ENCODE measurements at regions of chr1 and their contacts with region 1.

Region 1: GRCh38 chr1:210143465-210144062 is 89.0 kb upstream of the SERTAD4 start:
- DNase-seq: peak; percentile 95
- ATAC-seq: peak; percentile 76
- H3K4me3 ChIP-seq: no peak overlapping the region
- H3K27ac ChIP-seq: no peak overlapping the region
- H3K4me1 ChIP-seq: 0 out of 2 replicates have a peak, but pooled peaks cover 5% of the 10 kb centered on the region
- H3K27me3 ChIP-seq: no peaks in the 10 kb centered on the region
- CTCF ChIP-seq: peak; percentile 91

Region 2: DNA sequence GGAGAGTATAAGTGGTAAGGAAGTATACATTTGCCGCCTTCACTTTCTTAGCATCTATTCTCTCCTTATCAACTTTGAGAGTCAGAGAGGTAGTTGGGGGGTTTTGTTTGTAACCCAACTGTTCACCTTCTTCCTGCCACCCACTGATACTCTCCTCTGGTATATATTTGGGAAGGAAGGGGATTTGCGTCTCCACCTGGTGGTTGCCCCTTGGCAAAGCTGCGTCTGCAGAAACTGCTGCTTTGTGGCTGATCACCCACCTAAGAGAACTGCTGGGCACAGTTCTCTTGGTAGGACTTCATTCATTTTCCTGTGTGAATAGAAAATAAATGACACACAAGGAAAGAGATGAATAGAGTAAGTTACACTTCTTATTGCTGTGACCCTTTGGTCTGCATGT is 118.6 kb before region 1 on chr1:
- CTCF ChIA-PET with region 1: no interaction called
- POLR2A ChIA-PET with region 1: no interaction called
- intact Hi-C with region 1: loop called (anchors 10 kb)
- DNase-seq: no peak
- ATAC-seq: no peak
- H3K4me3 ChIP-seq: no peak overlapping the region
- H3K27ac ChIP-seq: no peak overlapping the region
- H3K4me1 ChIP-seq: no peaks in the 10 kb centered on the region
- H3K27me3 ChIP-seq: no peaks in the 10 kb centered on the region
- CTCF ChIP-seq: peak; percentile 38

Region 3: DNA sequence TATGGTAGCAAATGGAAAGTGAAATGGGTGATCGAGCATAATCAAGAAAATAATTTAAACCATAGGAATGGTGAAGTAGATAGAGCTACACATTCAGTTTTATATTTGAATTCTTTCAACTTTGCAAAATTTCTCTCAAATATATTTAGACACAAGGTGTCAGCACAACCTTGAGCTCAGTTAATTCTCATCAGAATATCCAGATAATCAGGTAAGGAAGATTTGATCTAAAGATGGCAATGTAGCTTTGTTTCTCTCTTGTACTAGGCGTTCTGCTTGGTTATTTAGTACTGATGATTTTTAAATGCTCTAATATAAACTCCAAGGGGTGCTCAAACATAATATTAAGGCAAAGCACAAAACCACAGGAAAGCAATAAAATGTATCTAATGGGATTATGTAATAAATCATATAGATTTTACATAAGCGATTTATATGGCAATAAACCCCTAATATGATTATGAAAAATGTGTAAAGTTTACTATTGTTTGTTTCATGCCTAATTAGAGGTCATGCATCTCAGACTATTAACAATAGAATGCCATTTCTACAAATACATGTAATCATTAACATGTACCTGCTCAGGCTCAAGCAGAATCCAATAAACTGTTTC is 56.7 kb after region 1 on chr1:
- CTCF ChIA-PET with region 1: no interaction called
- POLR2A ChIA-PET with region 1: no interaction called
- intact Hi-C with region 1: loop called (anchors 2 kb)
- DNase-seq: peak; percentile 23
- ATAC-seq: no peak
- H3K4me3 ChIP-seq: no peak overlapping the region
- H3K27ac ChIP-seq: no peak overlapping the region
- H3K4me1 ChIP-seq: peaks cover 6% of the 10 kb centered on the region; the same call in 1 of the 2 replicates
- H3K27me3 ChIP-seq: no peaks in the 10 kb centered on the region
- CTCF ChIP-seq: 0 out of 2 replicates have a peak, but pooled peaks have one; percentile 29

Region 4: GRCh38 chr1:210239349-210240111 is 96.0 kb after region 1 on chr1:
- CTCF ChIA-PET with region 1: no interaction called
- POLR2A ChIA-PET with region 1: no interaction called
- intact Hi-C with region 1: loop called (anchors 5 kb)
- DNase-seq: peak; percentile 95
- ATAC-seq: peak; percentile 88
- H3K4me3 ChIP-seq: no peak overlapping the region
- H3K27ac ChIP-seq: no peak overlapping the region
- H3K4me1 ChIP-seq: peaks cover 27% of the 10 kb centered on the region
- H3K27me3 ChIP-seq: no peaks in the 10 kb centered on the region
- CTCF ChIP-seq: peak; percentile 61

Region 5: GRCh38 chr1:210400043-210400840 is 256.7 kb after region 1 on chr1:
- CTCF ChIA-PET with region 1: no interaction called
- POLR2A ChIA-PET with region 1: no interaction called
- intact Hi-C with region 1: loop called (anchors 5 kb)
- DNase-seq: peak; percentile 81
- ATAC-seq: peak; percentile 98
- H3K4me3 ChIP-seq: no peak overlapping the region
- H3K27ac ChIP-seq: 0 out of 2 replicates have a peak overlapping the region, but pooled peaks have one; percentile 16
- H3K4me1 ChIP-seq: peaks cover 9% of the 10 kb centered on the region
- H3K27me3 ChIP-seq: no peaks in the 10 kb centered on the region
- CTCF ChIP-seq: peak; percentile 97

Measured in PC-3 (cell line).